Caco-2 (cell line): ENCODE measurements at regions of chr17 and their contacts with region 1.

Region 1: GRCh38 chr17:38557836-38558727 is 47.7 kb downstream of the SRCIN1 start:
- DNase-seq: peak; percentile 93 to 95
- H3K4me3 ChIP-seq: peak overlapping the region; percentile 56
- H3K4me3 Mint-ChIP-seq: peak overlapping the region; percentile 81
- H3K27ac Mint-ChIP-seq: no peak overlapping the region
- H3K4me1 ChIP-seq: peaks cover 13% of the 10 kb centered on the region
- H3K4me1 Mint-ChIP-seq: no peaks in the 10 kb centered on the region
- H3K27me3 ChIP-seq: no peaks in the 10 kb centered on the region
- H3K27me3 Mint-ChIP-seq: no peaks in the 10 kb centered on the region
- CTCF ChIP-seq: peak; percentile 90 to 96

Region 2: DNA sequence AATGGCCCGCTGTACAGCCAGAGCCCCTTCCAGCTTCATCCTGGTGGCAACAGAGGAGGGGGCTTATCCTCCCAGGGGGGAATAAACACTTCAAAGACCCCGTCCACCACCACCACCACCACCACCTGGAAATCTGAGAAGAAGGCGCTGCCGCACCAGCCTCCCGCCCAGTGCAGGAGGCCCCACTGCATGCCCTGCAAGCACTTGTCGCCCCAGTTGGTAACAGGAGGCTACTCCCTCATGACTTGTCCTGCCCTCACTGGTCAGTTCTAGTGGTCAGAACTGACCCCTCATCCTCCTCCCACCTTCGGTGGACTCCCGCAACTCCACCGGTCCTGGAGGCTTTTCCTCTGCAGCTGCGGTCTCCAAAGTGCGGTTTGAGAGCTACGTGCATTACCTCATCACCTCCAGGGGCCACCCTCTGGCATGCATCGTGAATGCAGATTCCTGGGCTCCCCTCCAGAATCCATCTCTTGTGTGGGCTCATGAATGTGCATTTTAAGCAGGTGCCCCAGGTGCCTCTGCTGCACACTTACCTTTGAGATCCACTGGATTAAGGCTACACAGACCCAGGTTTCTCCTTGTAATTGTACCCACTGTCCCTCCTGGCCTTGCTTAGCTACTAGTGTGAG is 24.1 kb before region 1 on chr17:
- CTCF ChIA-PET with region 1: interaction called, 16 read pairs
- POLR2A ChIA-PET with region 1: interaction called, 3 read pairs
- intact Hi-C with region 1: no loop called
- DNase-seq: no peak
- H3K4me3 ChIP-seq: no peak overlapping the region
- H3K4me3 Mint-ChIP-seq: no peak overlapping the region
- H3K27ac Mint-ChIP-seq: no peak overlapping the region
- H3K4me1 ChIP-seq: no peaks in the 10 kb centered on the region
- H3K4me1 Mint-ChIP-seq: peaks cover 4% of the 10 kb centered on the region
- H3K27me3 ChIP-seq: no peaks in the 10 kb centered on the region
- H3K27me3 Mint-ChIP-seq: peaks cover 3% of the 10 kb centered on the region
- CTCF ChIP-seq: no peak

Region 3: GRCh38 chr17:38571833-38572668 is 14.0 kb after region 1 on chr17:
- CTCF ChIA-PET with region 1: interaction called, 13 read pairs
- POLR2A ChIA-PET with region 1: no interaction called
- intact Hi-C with region 1: loop called (anchors 1 kb)
- DNase-seq: peak in 1 of 2 experiments; percentile 35
- H3K4me3 ChIP-seq: peak overlapping the region; percentile 28
- H3K4me3 Mint-ChIP-seq: peak overlapping the region; percentile 61
- H3K27ac Mint-ChIP-seq: no peak overlapping the region
- H3K4me1 ChIP-seq: peaks cover 6% of the 10 kb centered on the region; the same call in 1 of the 2 replicates
- H3K4me1 Mint-ChIP-seq: no peaks in the 10 kb centered on the region
- H3K27me3 ChIP-seq: no peaks in the 10 kb centered on the region
- H3K27me3 Mint-ChIP-seq: no peaks in the 10 kb centered on the region
- CTCF ChIP-seq: no peak

Region 4: GRCh38 chr17:38598536-38598935 is 40.5 kb after region 1 on chr17:
- CTCF ChIA-PET with region 1: interaction called, 35 read pairs
- POLR2A ChIA-PET with region 1: interaction called, 8 read pairs
- intact Hi-C with region 1: no loop called
- DNase-seq: peak; percentile 96
- H3K4me3 ChIP-seq: no peak overlapping the region
- H3K4me3 Mint-ChIP-seq: no peak overlapping the region
- H3K27ac Mint-ChIP-seq: peak overlapping the region; percentile 72
- H3K4me1 ChIP-seq: peaks cover 41% of the 10 kb centered on the region
- H3K4me1 Mint-ChIP-seq: peaks cover 35% of the 10 kb centered on the region
- H3K27me3 ChIP-seq: no peaks in the 10 kb centered on the region
- H3K27me3 Mint-ChIP-seq: no peaks in the 10 kb centered on the region
- CTCF ChIP-seq: no peak

Region 5: GRCh38 chr17:38617011-38617867 is 59.2 kb after region 1 on chr17:
- CTCF ChIA-PET with region 1: interaction called, 36 read pairs
- POLR2A ChIA-PET with region 1: interaction called, 8 read pairs
- intact Hi-C with region 1: no loop called
- DNase-seq: no peak
- H3K4me3 ChIP-seq: no peak overlapping the region
- H3K4me3 Mint-ChIP-seq: no peak overlapping the region
- H3K27ac Mint-ChIP-seq: no peak overlapping the region
- H3K4me1 ChIP-seq: peaks cover 28% of the 10 kb centered on the region
- H3K4me1 Mint-ChIP-seq: peaks cover 36% of the 10 kb centered on the region
- H3K27me3 ChIP-seq: no peaks in the 10 kb centered on the region
- H3K27me3 Mint-ChIP-seq: no peaks in the 10 kb centered on the region
- CTCF ChIP-seq: peak in 1 of 2 experiments; percentile 13

Region 6: DNA sequence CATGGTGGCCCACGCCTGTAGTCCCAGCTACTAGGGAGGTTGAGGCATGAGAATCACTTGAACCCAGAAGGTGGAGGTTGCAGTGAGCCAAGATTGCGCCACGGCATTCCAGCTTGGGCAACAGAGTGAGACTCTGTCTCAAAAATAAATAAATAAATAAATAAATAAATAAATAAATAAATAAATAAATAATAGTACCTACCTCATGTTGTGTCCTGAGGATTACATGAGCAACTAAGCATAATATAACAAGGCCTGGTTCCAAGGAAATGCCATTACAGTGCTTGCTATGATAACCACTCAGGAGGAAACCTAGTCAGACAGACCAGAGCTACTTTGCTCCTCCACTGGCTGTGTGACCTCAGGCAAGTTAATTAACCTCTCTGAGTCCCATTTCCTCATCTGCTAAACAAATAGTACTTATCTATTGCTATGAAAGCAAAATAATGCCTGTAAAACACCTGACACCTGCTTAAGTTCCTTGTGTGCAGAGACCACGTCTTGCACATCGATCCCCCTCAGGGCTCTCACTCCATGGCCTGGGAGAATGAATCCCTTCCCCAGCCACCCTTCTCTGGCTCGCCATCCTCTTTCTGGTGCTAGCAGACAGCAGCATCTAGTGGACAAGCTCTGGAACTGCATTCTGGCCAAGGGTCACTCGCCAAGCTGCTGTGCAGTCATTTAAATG is 109.2 kb after region 1 on chr17:
- CTCF ChIA-PET with region 1: interaction called, 292 read pairs
- POLR2A ChIA-PET with region 1: interaction called, 4 read pairs
- intact Hi-C with region 1: loop called (anchors 1 kb)
- DNase-seq: peak; percentile 85 to 86
- H3K4me3 ChIP-seq: no peak overlapping the region
- H3K4me3 Mint-ChIP-seq: no peak overlapping the region
- H3K27ac Mint-ChIP-seq: no peak overlapping the region
- H3K4me1 ChIP-seq: peaks cover 9% of the 10 kb centered on the region
- H3K4me1 Mint-ChIP-seq: peaks cover 22% of the 10 kb centered on the region
- H3K27me3 ChIP-seq: no peaks in the 10 kb centered on the region
- H3K27me3 Mint-ChIP-seq: peaks cover 3% of the 10 kb centered on the region
- CTCF ChIP-seq: peak; percentile 99 to 100